ENCODE measurements at regions of chr22 and their contacts with region 1.

Region 1: DNA sequence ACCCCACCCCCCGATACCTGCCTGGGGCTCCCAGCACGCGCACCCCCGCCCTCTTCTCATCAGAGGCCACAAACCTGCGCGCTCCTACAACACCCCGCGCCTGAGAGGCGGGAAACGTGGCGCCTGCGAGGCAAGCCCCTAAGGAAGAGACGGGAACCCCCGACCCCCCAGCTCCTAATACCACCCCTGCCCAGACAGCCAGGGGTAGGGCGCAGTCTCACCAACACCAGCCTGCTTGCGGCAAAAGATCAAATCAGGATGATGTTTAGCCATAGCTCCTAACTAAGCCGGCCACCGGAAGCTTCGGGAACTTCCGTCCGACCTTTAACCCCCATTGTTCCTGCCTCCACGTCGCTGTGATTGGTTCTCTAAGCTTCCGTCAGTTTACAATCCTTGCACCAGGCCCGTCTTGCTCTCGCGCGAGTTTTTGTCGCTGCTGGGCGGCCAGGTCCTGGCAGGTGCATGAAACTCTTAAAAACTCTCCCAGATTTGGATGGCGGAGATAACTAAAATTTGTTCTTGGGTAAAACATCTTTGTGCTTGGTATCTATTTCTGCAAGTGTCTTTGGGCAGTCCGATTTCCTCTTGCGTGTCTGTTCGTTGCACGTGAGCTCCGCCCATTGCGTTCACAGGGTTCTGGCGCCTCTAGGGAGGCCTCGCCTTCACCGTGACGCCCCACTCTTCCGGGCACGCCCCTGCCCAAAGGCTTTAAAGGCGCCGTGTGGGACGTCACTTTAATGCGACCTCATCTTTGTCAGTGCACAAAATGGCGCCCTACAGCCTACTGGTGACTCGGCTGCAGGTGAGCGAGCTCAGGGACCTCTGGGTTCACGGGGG is at the starts of genes ACO2 and PHF5A:
- DNase-seq: peak; percentile 98
- H3K4me3 ChIP-seq: peak within 1 kb of the TSS; percentile 98 to 99
- H3K27ac ChIP-seq: peak within 1 kb of the TSS; percentile 95
- H3K4me1 ChIP-seq: peaks cover 46% of the 10 kb centered on the region
- H3K27me3 ChIP-seq: no peaks in the 10 kb centered on the region
- CTCF ChIP-seq: peak in 1 of 3 experiments; percentile 10
- POLR2A ChIP-seq: peak in 1 of 2 donors; percentile 40
- total RNA-seq, gene ACO2: 78.6 TPM
- total RNA-seq, gene PHF5A: 35.4 TPM

Region 2: GRCh38 chr22:41505511-41506220 is 37.1 kb after region 1 on chr22:
- intact Hi-C with region 1: loop called (anchors 1 kb)
- DNase-seq: no peak
- H3K4me3 ChIP-seq: no peak overlapping the region
- H3K27ac ChIP-seq: no peak overlapping the region
- H3K4me1 ChIP-seq: peaks cover 9% of the 10 kb centered on the region
- H3K27me3 ChIP-seq: no peaks in the 10 kb centered on the region
- CTCF ChIP-seq: no peak
- POLR2A ChIP-seq: no peak

Measured in vagina (tissue), 2 donors.